ENCODE measurements at regions of chr16 and their contacts with region 1.

Region 1: GRCh38 chr16:73058221-73058615 is 10.3 kb upstream of the ZFHX3 start:
- DNase-seq: peak; percentile 45
- H3K4me3 ChIP-seq: peak overlapping the region; percentile 35 to 94 (median 49)
- H3K27ac ChIP-seq: peak overlapping the region; percentile 65
- H3K4me1 ChIP-seq: peaks cover 61% of the 10 kb centered on the region
- H3K27me3 ChIP-seq: no peaks in the 10 kb centered on the region
- CTCF ChIP-seq: no peak
- POLR2A ChIP-seq: no peak

Region 2: GRCh38 chr16:71441348-71441781 is 1616.9 kb before region 1 on chr16:
- CTCF ChIA-PET with region 1: no interaction called
- POLR2A ChIA-PET with region 1: no interaction called
- dilution Hi-C with region 1: no loop called
- intact Hi-C with region 1: no loop called
- DNase-seq: no peak
- H3K4me3 ChIP-seq: no peak overlapping the region
- H3K27ac ChIP-seq: no peak overlapping the region
- H3K4me1 ChIP-seq: no peaks in the 10 kb centered on the region
- H3K27me3 ChIP-seq: no peaks in the 10 kb centered on the region
- CTCF ChIP-seq: peak; percentile 50 to 57
- POLR2A ChIP-seq: no peak

Region 3: DNA sequence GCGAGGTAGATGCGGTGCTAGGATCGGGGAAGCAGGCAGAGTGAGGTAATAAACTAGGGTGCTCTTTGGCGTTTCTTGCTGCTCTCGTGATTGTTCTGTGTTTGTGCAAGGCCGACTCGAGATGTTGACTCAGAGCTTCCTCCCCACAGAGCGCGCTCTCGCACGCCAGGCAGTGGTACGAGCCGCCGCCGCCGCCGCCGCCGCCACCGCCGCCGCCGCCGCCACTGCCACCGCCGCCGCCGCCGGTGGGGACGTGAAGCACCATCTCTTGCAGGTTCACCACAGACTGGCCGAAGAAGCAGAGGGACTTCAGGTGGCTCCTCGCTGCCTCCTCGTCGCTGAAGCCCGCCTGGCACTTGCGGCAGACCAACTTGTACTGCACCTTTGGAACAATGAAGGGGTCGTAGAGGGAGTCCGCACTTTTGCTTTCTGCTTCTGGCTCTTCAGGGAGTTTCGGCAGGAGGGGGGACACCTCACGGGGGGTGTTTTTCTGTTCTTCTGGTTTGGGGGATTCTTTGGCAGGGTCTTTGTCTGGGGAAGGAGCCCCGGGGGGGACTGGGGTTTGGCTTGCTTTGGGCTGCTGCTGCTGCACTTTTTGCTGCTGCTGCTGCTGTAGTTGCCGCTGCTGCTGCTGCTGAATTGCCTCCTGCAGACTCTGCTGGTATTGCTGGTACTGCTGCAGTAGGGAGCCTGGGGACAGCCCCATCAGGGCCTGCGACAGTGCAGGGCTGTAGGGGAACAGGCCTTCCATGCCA is 270.5 kb before region 1 on chr16:
- CTCF ChIA-PET with region 1: no interaction called
- POLR2A ChIA-PET with region 1: no interaction called
- dilution Hi-C with region 1: no loop called
- intact Hi-C with region 1: loop called (anchors 2 kb)
- DNase-seq: peak; percentile 86
- H3K4me3 ChIP-seq: peak overlapping the region; percentile 27 to 57 (median 55)
- H3K27ac ChIP-seq: peak overlapping the region; percentile 95
- H3K4me1 ChIP-seq: peaks cover 7% of the 10 kb centered on the region
- H3K27me3 ChIP-seq: no peaks in the 10 kb centered on the region
- CTCF ChIP-seq: no peak
- POLR2A ChIP-seq: no peak

Region 4: DNA sequence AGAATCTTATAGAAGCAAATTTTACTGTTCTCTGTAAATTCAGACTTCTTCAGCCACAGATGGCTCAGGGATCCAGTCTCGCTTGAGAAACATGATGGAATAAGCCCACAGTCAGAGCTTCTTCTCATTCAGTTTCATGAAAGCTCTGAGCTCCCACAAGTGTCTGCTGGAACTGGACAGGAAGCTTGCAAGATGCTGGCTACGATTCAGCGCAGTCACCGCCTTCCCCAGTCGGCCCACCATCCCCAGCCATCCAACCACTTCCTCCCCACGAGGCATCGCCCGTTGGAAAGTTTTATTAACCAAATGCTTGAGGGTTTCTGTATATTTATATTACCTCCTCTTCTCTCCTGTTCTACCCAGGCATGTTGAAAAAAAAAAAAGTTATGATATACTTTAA is 182.0 kb before region 1 on chr16:
- CTCF ChIA-PET with region 1: interaction called, 3 read pairs
- POLR2A ChIA-PET with region 1: no interaction called
- dilution Hi-C with region 1: no loop called
- intact Hi-C with region 1: loop called (anchors 2 kb)
- DNase-seq: peak; percentile 67
- H3K4me3 ChIP-seq: no peak overlapping the region
- H3K27ac ChIP-seq: peak overlapping the region; percentile 92
- H3K4me1 ChIP-seq: peaks cover 31% of the 10 kb centered on the region
- H3K27me3 ChIP-seq: no peaks in the 10 kb centered on the region
- CTCF ChIP-seq: no peak
- POLR2A ChIP-seq: no peak

Region 5: DNA sequence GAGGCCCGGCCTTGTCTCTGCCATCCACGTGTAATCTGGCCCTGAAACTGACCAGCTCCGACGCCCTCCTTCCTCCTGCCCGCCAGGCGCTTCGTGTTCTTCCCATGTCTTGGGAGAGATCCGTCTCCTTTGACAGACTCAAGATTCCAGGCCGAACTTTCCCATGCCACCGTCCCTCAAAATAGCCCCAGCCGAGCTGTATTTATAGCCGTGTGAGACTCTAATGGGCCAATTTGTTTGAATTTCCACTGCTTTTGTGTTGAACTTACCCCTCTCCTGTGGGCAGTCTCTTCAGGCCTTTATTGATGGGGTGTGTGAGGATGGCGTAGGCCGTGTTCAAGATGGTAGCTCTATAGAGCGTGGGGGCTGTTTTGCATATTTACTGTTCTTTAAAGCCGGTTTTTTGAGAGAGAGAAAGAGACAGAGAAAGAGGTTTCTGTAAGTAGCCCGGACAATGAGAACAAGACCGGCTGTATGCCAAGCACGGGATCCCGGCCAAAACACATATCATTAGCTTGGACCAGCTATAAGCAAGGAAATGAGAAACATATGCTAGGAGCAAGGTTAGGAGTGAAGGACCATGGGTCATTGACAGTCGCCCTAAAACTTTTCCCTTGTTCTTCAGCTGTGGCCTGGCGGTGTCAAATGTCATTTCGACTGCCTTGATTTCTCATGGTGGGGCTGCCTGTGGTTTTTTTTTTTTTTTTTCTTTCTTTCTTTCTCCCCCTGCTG is 114.2 kb after region 1 on chr16:
- CTCF ChIA-PET with region 1: interaction called, 19 read pairs
- POLR2A ChIA-PET with region 1: no interaction called
- dilution Hi-C with region 1: no loop called
- intact Hi-C with region 1: loop called (anchors 1 kb)
- DNase-seq: peak; percentile 98
- H3K4me3 ChIP-seq: no peak overlapping the region
- H3K27ac ChIP-seq: peak overlapping the region; percentile 72
- H3K4me1 ChIP-seq: peaks cover 29% of the 10 kb centered on the region
- H3K27me3 ChIP-seq: no peaks in the 10 kb centered on the region
- CTCF ChIP-seq: peak; percentile 17 to 31
- POLR2A ChIP-seq: peak; percentile 55

Measured in endothelial cell of umbilical vein (primary cell).